ENCODE measurements at regions of chr1 and their contacts with region 1.

Region 1: DNA sequence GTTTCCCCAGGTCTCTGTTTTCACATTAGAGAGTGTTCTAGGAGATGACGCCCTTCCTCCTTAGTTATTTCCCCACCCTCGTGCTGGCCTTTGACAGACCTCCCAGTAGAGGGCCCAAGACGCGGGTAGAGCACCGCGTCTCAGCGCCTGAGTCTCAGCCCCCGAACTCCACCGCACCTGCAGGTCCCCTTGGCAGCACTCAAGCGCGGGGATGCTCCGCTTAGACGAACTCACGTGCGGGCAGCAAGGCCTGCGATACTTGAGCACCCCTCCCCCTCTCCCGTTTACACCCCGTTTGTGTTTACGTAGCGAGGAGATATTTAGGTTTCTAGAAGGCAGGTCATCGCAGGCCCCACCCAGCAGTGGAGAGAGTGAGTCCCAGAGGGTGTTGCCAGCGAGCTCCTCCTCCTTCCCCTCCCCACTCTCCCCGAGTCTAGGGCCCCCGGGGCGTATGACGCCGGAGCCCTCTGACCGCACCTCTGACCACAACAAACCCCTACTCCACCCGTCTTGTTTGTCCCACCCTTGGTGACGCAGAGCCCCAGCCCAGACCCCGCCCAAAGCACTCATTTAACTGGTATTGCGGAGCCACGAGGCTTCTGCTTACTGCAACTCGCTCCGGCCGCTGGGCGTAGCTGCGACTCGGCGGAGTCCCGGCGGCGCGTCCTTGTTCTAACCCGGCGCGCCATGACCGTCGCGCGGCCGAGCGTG is at the start of gene CD55:
- DNase-seq: peak; percentile 92 to 100 (median 100)
- ATAC-seq: peak; percentile 95
- H3K4me3 ChIP-seq: peak within 1 kb of the TSS; percentile 88
- H3K4me3 Mint-ChIP-seq: peak within 1 kb of the TSS; percentile 90 to 99 (median 96)
- H3K27ac ChIP-seq: peak within 1 kb of the TSS; percentile 99
- H3K27ac Mint-ChIP-seq: peak within 1 kb of the TSS; percentile 99 to 100 (median 100)
- H3K4me1 ChIP-seq: peaks cover 6 to 13% of the 10 kb centered on the region in 2 donors
- H3K4me1 Mint-ChIP-seq: peaks cover 25 to 64% (median 50%) of the 10 kb centered on the region in 7 donors
- H3K27me3 ChIP-seq: no peaks in the 10 kb centered on the region
- H3K27me3 Mint-ChIP-seq: peaks cover 0 to 3% (median 0%) of the 10 kb centered on the region in 5 donors
- total RNA-seq, gene CD55: 122 to 264 (median 134) TPM

Region 2: GRCh38 chr1:206803221-206803730 is 518.0 kb before region 1 on chr1:
- CTCF ChIA-PET with region 1: no interaction called
- POLR2A ChIA-PET with region 1: no interaction called
- intact Hi-C with region 1: loop called (anchors 1 to 10 kb)
- DNase-seq: peak; percentile 42 to 96 (median 93)
- ATAC-seq: peak; percentile 97
- H3K4me3 ChIP-seq: no peak overlapping the region
- H3K4me3 Mint-ChIP-seq: peak overlapping the region in 9 of 10 donors; percentile 32 to 71 (median 57)
- H3K27ac ChIP-seq: peak overlapping the region; percentile 81
- H3K27ac Mint-ChIP-seq: peak overlapping the region; percentile 83 to 99 (median 95)
- H3K4me1 ChIP-seq: peaks cover 34 to 41% of the 10 kb centered on the region in 2 donors
- H3K4me1 Mint-ChIP-seq: peaks cover 29 to 78% (median 77%) of the 10 kb centered on the region in 7 donors
- H3K27me3 ChIP-seq: no peaks in the 10 kb centered on the region
- H3K27me3 Mint-ChIP-seq: peaks cover 0 to 44% (median 0%) of the 10 kb centered on the region in 5 donors

Region 3: GRCh38 chr1:207084701-207085180 is 236.5 kb before region 1 on chr1:
- CTCF ChIA-PET with region 1: interaction called, 3 read pairs
- POLR2A ChIA-PET with region 1: interaction called, 7 read pairs
- intact Hi-C with region 1: loop called (anchors 1 kb)
- DNase-seq: peak in 8 of 9 donors; percentile 43 to 71 (median 62)
- ATAC-seq: peak; percentile 67
- H3K4me3 ChIP-seq: no peak overlapping the region
- H3K4me3 Mint-ChIP-seq: no peak overlapping the region
- H3K27ac ChIP-seq: no peak overlapping the region
- H3K27ac Mint-ChIP-seq: peak overlapping the region in 5 of 9 donors; percentile 5 to 78 (median 53)
- H3K4me1 ChIP-seq: peaks cover 0 to 15% of the 10 kb centered on the region in 2 donors
- H3K4me1 Mint-ChIP-seq: peaks cover 3 to 33% (median 32%) of the 10 kb centered on the region in 7 donors
- H3K27me3 ChIP-seq: no peaks in the 10 kb centered on the region
- H3K27me3 Mint-ChIP-seq: peaks cover 0 to 34% (median 0%) of the 10 kb centered on the region in 5 donors

Region 4: DNA sequence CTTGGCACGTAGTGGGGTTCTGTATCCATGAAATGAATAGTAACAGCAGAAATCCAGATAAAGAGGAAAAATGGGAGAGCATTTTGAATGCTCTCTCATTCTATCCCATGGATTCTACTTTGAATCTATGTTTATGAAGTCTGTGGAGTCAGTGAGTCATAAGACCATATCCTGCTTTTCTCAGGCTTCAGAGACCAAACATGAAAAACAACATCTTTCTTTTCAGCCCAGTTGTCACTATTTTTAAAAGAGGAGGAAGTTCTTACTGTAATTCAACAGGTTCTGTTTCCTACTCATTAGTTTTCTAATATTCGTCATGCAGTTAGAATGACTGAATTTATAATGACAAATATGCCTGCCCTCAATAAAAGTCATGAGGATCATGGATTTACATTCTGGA is 39.2 kb before region 1 on chr1:
- CTCF ChIA-PET with region 1: interaction called, 4 read pairs
- POLR2A ChIA-PET with region 1: interaction called, 95 read pairs
- intact Hi-C with region 1: loop called (anchors 1 kb)
- DNase-seq: peak in 2 of 9 donors; percentile 6 to 25
- ATAC-seq: no peak
- H3K4me3 ChIP-seq: no peak overlapping the region
- H3K4me3 Mint-ChIP-seq: peak overlapping the region in 9 of 10 donors; percentile 18 to 71 (median 60)
- H3K27ac ChIP-seq: no peak overlapping the region
- H3K27ac Mint-ChIP-seq: peak overlapping the region; percentile 55 to 92 (median 78)
- H3K4me1 ChIP-seq: peaks cover 0 to 32% of the 10 kb centered on the region in 2 donors
- H3K4me1 Mint-ChIP-seq: peaks cover 27 to 78% (median 66%) of the 10 kb centered on the region in 7 donors
- H3K27me3 ChIP-seq: no peaks in the 10 kb centered on the region
- H3K27me3 Mint-ChIP-seq: peaks cover 0 to 2% (median 0%) of the 10 kb centered on the region in 5 donors

Region 5: DNA sequence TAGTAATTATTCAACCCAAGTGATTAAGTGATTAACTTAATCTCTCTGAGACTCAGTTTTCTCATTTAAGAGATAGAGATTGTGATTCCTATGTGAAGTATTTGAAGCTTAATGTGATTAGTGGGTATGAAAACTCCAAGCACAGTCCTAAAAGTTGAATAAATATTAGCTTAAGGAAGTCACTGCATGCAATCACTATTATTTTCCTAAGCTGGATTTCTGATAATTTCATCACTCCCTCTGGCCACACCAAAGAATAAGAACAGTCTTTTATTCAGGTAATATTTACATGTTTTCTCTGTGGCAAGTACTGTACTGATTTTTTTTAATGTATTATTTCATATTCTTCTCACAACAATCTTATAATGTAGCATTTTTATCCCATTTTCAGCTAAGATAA is 31.3 kb after region 1 on chr1:
- CTCF ChIA-PET with region 1: no interaction called
- POLR2A ChIA-PET with region 1: interaction called, 4 read pairs
- intact Hi-C with region 1: loop called in 1 of 2 experiments (anchors 2 kb)
- DNase-seq: no peak
- ATAC-seq: no peak
- H3K4me3 ChIP-seq: no peak overlapping the region
- H3K4me3 Mint-ChIP-seq: peak overlapping the region in 1 of 10 donors; percentile 29
- H3K27ac ChIP-seq: no peak overlapping the region
- H3K27ac Mint-ChIP-seq: no peak overlapping the region
- H3K4me1 ChIP-seq: peaks cover 0 to 20% of the 10 kb centered on the region in 2 donors
- H3K4me1 Mint-ChIP-seq: peaks cover 28 to 98% (median 83%) of the 10 kb centered on the region in 7 donors
- H3K27me3 ChIP-seq: no peaks in the 10 kb centered on the region
- H3K27me3 Mint-ChIP-seq: no peaks in the 10 kb centered on the region

Region 6: DNA sequence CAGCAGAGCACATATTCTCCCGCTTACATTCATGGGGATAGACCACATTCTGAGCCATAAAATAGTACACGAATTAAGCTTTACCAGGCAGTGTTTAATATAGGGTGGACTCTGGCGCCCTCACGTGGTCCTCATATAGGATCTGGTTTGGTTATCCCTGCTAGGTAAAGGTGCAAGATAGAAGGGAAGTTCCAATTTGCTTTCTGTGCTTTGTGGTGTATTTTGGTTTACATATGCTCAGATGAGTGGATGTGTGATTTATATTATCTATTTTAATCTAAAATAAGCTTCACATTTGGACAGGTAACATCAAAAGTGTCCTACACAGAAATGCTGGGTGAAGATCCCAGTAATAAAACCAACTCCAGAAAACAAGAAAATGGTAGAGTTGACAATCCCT is 178.3 kb after region 1 on chr1:
- CTCF ChIA-PET with region 1: interaction called, 5 read pairs
- POLR2A ChIA-PET with region 1: no interaction called
- intact Hi-C with region 1: loop called (anchors 1 kb)
- DNase-seq: peak; percentile 29 to 78 (median 65)
- ATAC-seq: peak; percentile 79
- H3K4me3 ChIP-seq: no peak overlapping the region
- H3K4me3 Mint-ChIP-seq: no peak overlapping the region
- H3K27ac ChIP-seq: no peak overlapping the region
- H3K27ac Mint-ChIP-seq: peak overlapping the region in 1 of 9 donors; percentile 59
- H3K4me1 ChIP-seq: peaks cover 0 to 6% of the 10 kb centered on the region in 2 donors
- H3K4me1 Mint-ChIP-seq: peaks cover 6 to 17% (median 11%) of the 10 kb centered on the region in 7 donors
- H3K27me3 ChIP-seq: no peaks in the 10 kb centered on the region
- H3K27me3 Mint-ChIP-seq: peaks cover 5 to 60% (median 23%) of the 10 kb centered on the region in 5 donors